ENCODE measurements at regions of chr9 and their contacts with region 1.

Region 1: GRCh38 chr9:37903647-37904444 is at the start of gene SLC25A51:
- DNase-seq: peak; percentile 94
- H3K4me3 ChIP-seq: peak within 1 kb of the TSS; percentile 70
- H3K27ac ChIP-seq: peak within 1 kb of the TSS; percentile 63
- H3K4me1 ChIP-seq: peaks cover 6% of the 10 kb centered on the region
- H3K27me3 ChIP-seq: no peaks in the 10 kb centered on the region
- CTCF ChIP-seq: peak; percentile 98
- total RNA-seq, gene SLC25A51: 36.3 and 40.8 TPM in 2 replicates

Region 2: GRCh38 chr9:37840560-37841194 is 63.2 kb before region 1 on chr9:
- CTCF ChIA-PET with region 1: no interaction called
- POLR2A ChIA-PET with region 1: no interaction called
- intact Hi-C with region 1: loop called (anchors 10 kb)
- DNase-seq: peak; percentile 9
- H3K4me3 ChIP-seq: no peak overlapping the region
- H3K27ac ChIP-seq: no peak overlapping the region
- H3K4me1 ChIP-seq: no peaks in the 10 kb centered on the region
- H3K27me3 ChIP-seq: no peaks in the 10 kb centered on the region
- CTCF ChIP-seq: no peak

Measured in A673 (cell line).